Activated CD4-positive, alpha-beta memory T cell treated with anti-CD3 and anti-CD28 coated beads for 36 hours (primary cell): ENCODE measurements at regions of chr10 and their contacts with region 1.

Region 1: DNA sequence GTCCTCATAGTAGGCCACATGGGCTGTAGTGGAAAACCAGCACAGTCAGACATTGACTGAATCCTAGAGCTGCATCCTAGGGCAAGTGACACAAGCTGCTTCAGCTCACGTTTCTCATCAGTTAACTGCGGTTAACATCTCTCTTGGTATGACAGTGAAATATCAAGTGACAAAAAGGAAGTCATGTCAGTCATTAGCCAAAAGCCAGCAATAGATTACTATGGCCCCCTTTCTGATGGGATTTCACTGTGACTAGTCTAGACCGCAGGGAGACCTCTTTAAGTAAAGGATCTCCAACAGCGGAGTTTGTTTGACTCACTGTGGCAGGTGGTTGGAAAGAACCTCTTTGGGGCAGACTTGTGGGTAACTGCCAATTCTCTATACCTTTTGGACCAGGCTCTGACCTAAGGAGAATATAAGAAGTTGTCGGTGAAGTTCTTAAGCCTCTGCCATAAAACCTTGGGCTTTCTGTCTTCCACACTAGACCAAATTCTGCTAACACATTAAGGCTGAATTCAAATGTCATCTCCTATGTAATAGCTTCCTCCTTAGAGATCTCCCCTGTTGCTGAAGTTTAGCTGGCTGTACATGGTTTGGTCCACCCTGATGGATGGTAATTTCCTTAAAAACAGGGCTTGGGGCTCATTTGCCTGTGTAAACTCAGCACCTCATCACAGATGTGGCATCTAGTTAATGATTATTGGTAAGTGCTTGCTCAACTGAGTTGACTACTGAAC is 115.3 kb downstream of the SGMS1 start:
- DNase-seq: peak; percentile 79
- H3K4me3 Mint-ChIP-seq: no peak overlapping the region
- H3K27ac Mint-ChIP-seq: no peak overlapping the region
- H3K4me1 Mint-ChIP-seq: peaks cover 68% of the 10 kb centered on the region
- H3K27me3 Mint-ChIP-seq: peaks cover 5% of the 10 kb centered on the region

Region 2: GRCh38 chr10:50396491-50397311 is 111.8 kb before region 1 on chr10:
- CTCF ChIA-PET with region 1: interaction called, 3 read pairs
- POLR2A ChIA-PET with region 1: interaction called, 8 read pairs
- intact Hi-C with region 1: loop called (anchors 1 kb)
- DNase-seq: peak; percentile 51
- H3K4me3 Mint-ChIP-seq: peak overlapping the region; percentile 17
- H3K27ac Mint-ChIP-seq: peak overlapping the region; percentile 65
- H3K4me1 Mint-ChIP-seq: peaks cover 46% of the 10 kb centered on the region
- H3K27me3 Mint-ChIP-seq: no peaks in the 10 kb centered on the region

Region 3: DNA sequence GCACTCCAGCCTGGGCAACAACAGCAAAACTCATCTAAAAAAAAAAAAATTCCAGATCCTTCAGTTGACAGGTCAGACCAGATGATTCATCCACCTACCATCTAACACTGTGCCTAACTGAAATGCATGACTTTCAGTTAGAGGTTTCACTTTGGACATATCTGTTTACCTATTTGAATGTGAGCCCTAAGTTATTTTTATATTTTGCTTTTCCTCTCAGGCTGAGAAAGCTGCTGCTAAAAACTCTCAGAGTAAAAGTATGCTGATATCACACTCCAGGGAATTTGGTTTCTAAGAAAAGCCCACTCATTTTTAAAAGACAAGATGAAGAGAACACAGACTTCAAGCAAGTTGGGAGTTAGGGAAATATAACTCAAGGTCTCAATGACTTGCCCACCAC is 10.7 kb before region 1 on chr10:
- CTCF ChIA-PET with region 1: no interaction called
- POLR2A ChIA-PET with region 1: interaction called, 3 read pairs
- intact Hi-C with region 1: loop called (anchors 1 kb)
- DNase-seq: no peak
- H3K4me3 Mint-ChIP-seq: no peak overlapping the region
- H3K27ac Mint-ChIP-seq: peak overlapping the region; percentile 57
- H3K4me1 Mint-ChIP-seq: peaks cover 40% of the 10 kb centered on the region
- H3K27me3 Mint-ChIP-seq: no peaks in the 10 kb centered on the region

Region 4: DNA sequence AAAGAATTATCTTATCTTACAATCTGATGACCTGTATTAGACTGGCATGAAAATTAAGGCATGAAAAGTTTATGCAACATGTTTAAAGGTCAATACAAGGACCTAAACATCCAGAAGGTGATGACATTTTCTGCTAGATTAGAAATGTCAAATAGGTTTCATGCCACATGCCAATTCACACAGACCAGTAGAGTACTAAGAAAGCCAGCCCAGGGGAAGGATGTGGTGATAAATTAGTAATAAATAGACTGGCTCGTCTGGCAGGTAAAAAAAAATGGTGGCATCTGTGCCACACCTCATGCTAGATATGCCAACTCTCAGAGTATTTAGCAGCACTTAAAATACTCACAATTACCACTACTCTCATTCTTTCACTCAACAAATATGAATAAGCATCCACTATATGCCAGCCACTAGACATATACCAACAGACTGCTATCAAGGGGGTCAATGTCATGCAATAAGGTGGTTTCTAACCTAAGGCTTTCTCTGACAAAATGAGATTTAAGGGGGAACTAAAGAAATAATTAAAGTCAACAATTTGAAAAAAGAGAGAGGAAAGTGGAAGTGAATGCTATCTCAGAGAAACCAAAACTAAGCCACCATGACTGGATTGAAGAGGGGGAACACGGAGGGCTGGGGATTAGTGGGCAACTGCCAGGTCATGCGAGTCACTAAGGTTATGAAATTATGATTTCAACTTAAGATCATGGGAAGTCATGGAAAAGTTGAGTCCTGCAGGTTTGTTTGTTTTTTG is 31.8 kb after region 1 on chr10:
- CTCF ChIA-PET with region 1: interaction called, 7 read pairs
- POLR2A ChIA-PET with region 1: interaction called, 11 read pairs
- intact Hi-C with region 1: loop called (anchors 1 kb)
- DNase-seq: peak; percentile 70
- H3K4me3 Mint-ChIP-seq: peak overlapping the region; percentile 36
- H3K27ac Mint-ChIP-seq: peak overlapping the region; percentile 75
- H3K4me1 Mint-ChIP-seq: peaks cover 86% of the 10 kb centered on the region
- H3K27me3 Mint-ChIP-seq: no peaks in the 10 kb centered on the region